Endothelial cell of umbilical vein (primary cell): ENCODE measurements at regions of chr2 and their contacts with region 1.

Region 1: DNA sequence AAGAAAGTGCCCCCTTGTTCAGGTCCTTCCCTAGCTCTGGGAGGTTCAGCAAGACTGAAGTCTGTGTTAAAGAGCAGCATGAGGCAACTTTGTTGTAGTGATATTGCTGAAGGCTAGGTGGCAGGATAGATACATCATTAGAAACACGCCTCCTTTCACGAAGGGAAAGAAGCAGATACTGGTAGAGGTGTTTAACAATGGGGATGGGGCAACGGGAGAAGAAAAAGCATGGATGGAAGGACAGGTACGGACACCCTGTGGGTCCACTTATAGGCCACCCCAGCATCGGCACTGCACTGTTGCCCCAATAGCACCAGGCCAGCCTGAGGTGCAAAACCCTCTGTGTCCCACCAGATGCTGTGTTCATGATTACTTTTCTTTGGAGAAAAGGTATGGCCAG is 3.5 kb upstream of the IGFBP5 start:
- DNase-seq: peak; percentile 59
- H3K4me3 ChIP-seq: no peak overlapping the region
- H3K27ac ChIP-seq: no peak overlapping the region
- H3K4me1 ChIP-seq: peaks cover 3% of the 10 kb centered on the region
- H3K27me3 ChIP-seq: peaks cover 52 to 58% of the 10 kb centered on the region in 2 experiments
- CTCF ChIP-seq: peak; percentile 52
- POLR2A ChIP-seq: no peak

Region 2: GRCh38 chr2:216827073-216827720 is 128.3 kb after region 1 on chr2:
- CTCF ChIA-PET with region 1: no interaction called
- POLR2A ChIA-PET with region 1: no interaction called
- dilution Hi-C with region 1: no loop called
- intact Hi-C with region 1: no loop called
- DNase-seq: no peak
- H3K4me3 ChIP-seq: no peak overlapping the region
- H3K27ac ChIP-seq: no peak overlapping the region
- H3K4me1 ChIP-seq: no peaks in the 10 kb centered on the region
- H3K27me3 ChIP-seq: no peaks in the 10 kb centered on the region
- CTCF ChIP-seq: no peak
- POLR2A ChIP-seq: no peak

Region 3: GRCh38 chr2:216877084-216877483 is 178.2 kb after region 1 on chr2:
- CTCF ChIA-PET with region 1: no interaction called
- POLR2A ChIA-PET with region 1: no interaction called
- dilution Hi-C with region 1: no loop called
- intact Hi-C with region 1: loop called (anchors 5 kb)
- DNase-seq: peak; percentile 4
- H3K4me3 ChIP-seq: no peak overlapping the region
- H3K27ac ChIP-seq: no peak overlapping the region
- H3K4me1 ChIP-seq: no peaks in the 10 kb centered on the region
- H3K27me3 ChIP-seq: no peaks in the 10 kb centered on the region
- CTCF ChIP-seq: peak; percentile 4 to 21
- POLR2A ChIP-seq: no peak

Region 4: DNA sequence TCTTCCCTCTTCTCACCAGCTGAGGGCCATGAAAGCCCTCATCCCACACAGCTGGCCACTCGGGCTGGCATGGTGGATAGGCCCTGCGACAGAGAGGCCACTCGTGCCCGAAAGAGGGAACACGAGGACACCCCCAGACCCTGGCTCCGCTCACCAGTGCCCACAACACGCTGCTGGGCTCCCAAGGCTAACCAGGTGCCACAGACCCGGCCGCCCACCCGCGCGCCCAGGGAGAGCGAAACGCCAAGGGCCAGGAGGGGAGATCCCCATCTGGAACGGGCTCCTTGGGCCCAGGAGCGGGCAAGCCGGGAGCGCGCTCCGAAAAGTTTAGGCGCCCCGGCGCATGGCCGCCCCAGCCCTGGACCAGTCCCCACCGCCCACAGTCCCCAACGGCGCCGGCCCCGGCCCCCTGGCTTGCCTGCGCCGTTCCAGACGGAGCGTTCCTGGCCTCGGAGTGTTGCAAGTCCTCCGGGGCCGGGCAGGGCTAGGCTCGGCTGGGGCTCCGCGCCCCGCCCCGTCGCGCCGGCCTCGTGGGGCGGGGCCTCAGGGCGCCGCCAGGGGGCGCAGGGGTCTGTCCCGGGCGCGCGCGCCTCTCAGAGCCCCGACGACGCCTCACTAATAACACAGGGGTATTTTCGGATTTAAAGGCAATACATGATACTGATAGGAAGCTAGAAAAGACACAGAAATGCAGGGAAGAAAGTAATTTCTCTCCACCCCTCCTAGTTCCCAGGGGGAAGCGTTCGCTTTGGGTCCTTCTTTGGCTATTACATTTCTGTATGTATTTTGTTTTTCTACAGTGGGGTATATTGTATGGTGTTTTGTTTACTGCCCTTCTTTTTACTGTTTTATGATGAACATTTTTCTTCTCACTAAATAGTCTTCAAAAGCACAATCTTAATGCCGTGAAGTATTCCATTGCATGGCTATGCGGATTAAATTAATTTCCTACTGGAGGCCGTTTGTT is 1593.4 kb after region 1 on chr2 and contains the start of gene TMBIM1:
- CTCF ChIA-PET with region 1: no interaction called
- POLR2A ChIA-PET with region 1: no interaction called
- dilution Hi-C with region 1: no loop called
- intact Hi-C with region 1: no loop called
- DNase-seq: peak; percentile 69
- H3K4me3 ChIP-seq: peak within 1 kb of the TSS; percentile 69 to 79 (median 74)
- H3K27ac ChIP-seq: peak within 1 kb of the TSS; percentile 63
- H3K4me1 ChIP-seq: peaks cover 63% of the 10 kb centered on the region
- H3K27me3 ChIP-seq: no peaks in the 10 kb centered on the region
- CTCF ChIP-seq: peak; percentile 61 to 97
- POLR2A ChIP-seq: peak; percentile 68
- total RNA-seq, gene TMBIM1: 141 and 159 TPM in 2 replicates